K562 (cell line): ENCODE measurements at regions of chr1 and their contacts with region 1.

Region 1: DNA sequence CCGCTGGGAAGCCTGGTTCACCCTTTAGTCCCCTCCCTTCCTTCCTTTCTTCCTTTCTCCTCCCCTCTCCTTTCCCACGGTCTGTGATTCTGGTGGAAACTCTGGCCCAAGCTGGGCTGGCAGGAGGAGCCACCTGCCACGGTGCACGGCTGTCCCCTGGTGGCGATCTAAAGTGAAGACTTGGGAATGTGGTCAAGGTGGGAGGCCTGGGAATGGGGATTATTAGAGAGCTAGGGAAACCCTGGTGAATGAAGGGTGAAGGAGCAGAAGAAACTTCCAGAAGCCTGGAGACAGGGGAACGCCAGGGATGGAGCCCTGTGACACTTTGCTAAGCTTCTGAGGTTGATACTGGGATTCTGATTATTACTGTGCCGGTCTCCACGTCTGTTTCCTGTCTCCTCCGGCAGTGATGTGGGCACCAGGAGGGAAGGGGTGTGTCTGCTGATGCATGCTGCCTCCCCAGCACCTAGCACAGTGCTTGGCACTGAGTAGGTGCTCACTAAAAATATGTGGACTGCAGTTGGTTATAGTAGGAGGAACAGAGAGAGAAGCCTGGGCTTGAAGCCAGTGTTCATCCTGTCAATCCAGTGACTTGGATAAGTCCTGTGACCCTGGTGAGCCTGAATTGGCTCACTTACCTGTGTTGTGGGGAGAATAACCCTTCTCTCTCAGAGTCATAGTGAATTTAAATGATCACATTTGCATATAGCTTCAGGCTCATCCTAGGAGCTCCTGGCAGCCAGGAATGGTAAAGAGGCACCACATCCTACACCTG is 71.2 kb upstream of the NBPF3 start:
- DNase-seq: peak; percentile 72 to 86 (median 82)
- ATAC-seq: peak; percentile 91
- H3K4me3 ChIP-seq: no peak overlapping the region
- H3K27ac ChIP-seq: no peak overlapping the region
- H3K4me1 ChIP-seq: peaks cover 0 to 5% of the 10 kb centered on the region in 2 experiments; a peak in 1 of 5 replicates
- H3K27me3 ChIP-seq: peaks cover 5 to 6% of the 10 kb centered on the region in 2 experiments; a peak in 3 of 5 replicates
- CTCF ChIP-seq: peak; percentile 98 to 99 (median 99)
- EP300 ChIP-seq: peak; percentile 34
- POLR2A ChIP-seq: no peak
- RAD21 ChIP-seq: peak; percentile 100

Region 2: GRCh38 chr1:21232044-21232443 is 136.7 kb before region 1 on chr1:
- CTCF ChIA-PET with region 1: interaction called, 126 read pairs
- POLR2A ChIA-PET with region 1: interaction called, 12 read pairs
- in situ Hi-C with region 1: loop called (anchors 5 kb)
- intact Hi-C with region 1: loop called (anchors 1 kb)
- DNase-seq: peak; percentile 67 to 78 (median 76)
- ATAC-seq: peak; percentile 87
- H3K4me3 ChIP-seq: no peak overlapping the region
- H3K27ac ChIP-seq: no peak overlapping the region
- H3K4me1 ChIP-seq: no peaks in the 10 kb centered on the region
- H3K27me3 ChIP-seq: no peaks in the 10 kb centered on the region
- CTCF ChIP-seq: peak; percentile 76 to 86 (median 85)
- EP300 ChIP-seq: no peak
- POLR2A ChIP-seq: no peak
- RAD21 ChIP-seq: peak; percentile 82 to 86

Region 3: GRCh38 chr1:21324368-21325141 is 44.1 kb before region 1 on chr1:
- CTCF ChIA-PET with region 1: no interaction called
- POLR2A ChIA-PET with region 1: no interaction called
- in situ Hi-C with region 1: no loop called
- intact Hi-C with region 1: no loop called
- DNase-seq: peak; percentile 65 to 79 (median 70)
- ATAC-seq: peak; percentile 45
- H3K4me3 ChIP-seq: no peak overlapping the region
- H3K27ac ChIP-seq: peak overlapping the region; percentile 56; the same call in 2 of the 3 replicates
- H3K4me1 ChIP-seq: peaks cover 44 to 45% of the 10 kb centered on the region in 2 experiments
- H3K27me3 ChIP-seq: no peaks in the 10 kb centered on the region
- CTCF ChIP-seq: no peak
- EP300 ChIP-seq: no peak; the same call in 1 of the 2 replicates
- POLR2A ChIP-seq: no peak
- RAD21 ChIP-seq: no peak

Region 4: GRCh38 chr1:21468599-21468998 is 99.9 kb after region 1 on chr1:
- CTCF ChIA-PET with region 1: interaction called, 13 read pairs
- POLR2A ChIA-PET with region 1: no interaction called
- in situ Hi-C with region 1: no loop called
- intact Hi-C with region 1: loop called (anchors 1 kb)
- DNase-seq: peak; percentile 46 to 79 (median 54)
- ATAC-seq: peak; percentile 51; the same call in 2 of the 3 replicates
- H3K4me3 ChIP-seq: no peak overlapping the region
- H3K27ac ChIP-seq: no peak overlapping the region
- H3K4me1 ChIP-seq: no peaks in the 10 kb centered on the region
- H3K27me3 ChIP-seq: peaks cover 2 to 21% of the 10 kb centered on the region in 2 experiments; a peak in 2 of 5 replicates
- CTCF ChIP-seq: peak; percentile 66 to 79 (median 75)
- EP300 ChIP-seq: no peak
- POLR2A ChIP-seq: no peak
- RAD21 ChIP-seq: peak; percentile 69 to 84

Region 5: DNA sequence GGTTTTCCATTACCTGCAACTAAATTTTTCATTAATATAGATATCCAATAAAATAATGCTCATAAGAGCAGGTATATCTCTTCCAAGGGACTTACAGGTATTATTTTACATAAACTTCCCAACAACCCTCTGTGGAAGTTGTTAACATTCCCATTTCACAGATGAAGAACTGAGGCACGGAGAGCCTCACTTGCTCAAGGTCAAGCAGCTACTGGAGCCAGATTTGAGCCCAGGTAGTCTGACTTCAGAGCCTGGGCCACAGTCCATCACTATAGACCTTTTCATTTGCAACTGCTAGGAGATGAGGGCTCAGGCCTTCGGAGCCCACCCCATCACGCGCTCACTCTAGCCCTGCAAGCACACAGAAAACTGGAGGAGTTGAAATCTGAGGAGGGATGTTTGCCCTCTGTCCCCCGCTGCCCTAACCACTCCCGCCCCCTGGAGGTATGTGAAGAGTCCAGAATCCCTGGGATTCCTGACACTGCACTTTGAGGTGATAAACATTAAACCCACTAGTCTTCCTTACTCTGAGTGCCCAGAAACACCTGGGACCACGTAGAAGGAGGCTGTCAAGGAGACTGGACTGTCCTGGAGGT is 128.9 kb after region 1 on chr1:
- CTCF ChIA-PET with region 1: interaction called, 17 read pairs
- POLR2A ChIA-PET with region 1: no interaction called
- in situ Hi-C with region 1: no loop called
- intact Hi-C with region 1: no loop called
- DNase-seq: peak; percentile 36 to 55 (median 53)
- ATAC-seq: peak; percentile 76
- H3K4me3 ChIP-seq: no peak overlapping the region
- H3K27ac ChIP-seq: no peak overlapping the region
- H3K4me1 ChIP-seq: no peaks in the 10 kb centered on the region
- H3K27me3 ChIP-seq: peaks cover 16 to 27% of the 10 kb centered on the region in 2 experiments; a peak in 4 of 5 replicates
- CTCF ChIP-seq: peak; percentile 42 to 56 (median 55)
- EP300 ChIP-seq: no peak
- POLR2A ChIP-seq: no peak
- RAD21 ChIP-seq: peak; percentile 21 to 62

Region 6: DNA sequence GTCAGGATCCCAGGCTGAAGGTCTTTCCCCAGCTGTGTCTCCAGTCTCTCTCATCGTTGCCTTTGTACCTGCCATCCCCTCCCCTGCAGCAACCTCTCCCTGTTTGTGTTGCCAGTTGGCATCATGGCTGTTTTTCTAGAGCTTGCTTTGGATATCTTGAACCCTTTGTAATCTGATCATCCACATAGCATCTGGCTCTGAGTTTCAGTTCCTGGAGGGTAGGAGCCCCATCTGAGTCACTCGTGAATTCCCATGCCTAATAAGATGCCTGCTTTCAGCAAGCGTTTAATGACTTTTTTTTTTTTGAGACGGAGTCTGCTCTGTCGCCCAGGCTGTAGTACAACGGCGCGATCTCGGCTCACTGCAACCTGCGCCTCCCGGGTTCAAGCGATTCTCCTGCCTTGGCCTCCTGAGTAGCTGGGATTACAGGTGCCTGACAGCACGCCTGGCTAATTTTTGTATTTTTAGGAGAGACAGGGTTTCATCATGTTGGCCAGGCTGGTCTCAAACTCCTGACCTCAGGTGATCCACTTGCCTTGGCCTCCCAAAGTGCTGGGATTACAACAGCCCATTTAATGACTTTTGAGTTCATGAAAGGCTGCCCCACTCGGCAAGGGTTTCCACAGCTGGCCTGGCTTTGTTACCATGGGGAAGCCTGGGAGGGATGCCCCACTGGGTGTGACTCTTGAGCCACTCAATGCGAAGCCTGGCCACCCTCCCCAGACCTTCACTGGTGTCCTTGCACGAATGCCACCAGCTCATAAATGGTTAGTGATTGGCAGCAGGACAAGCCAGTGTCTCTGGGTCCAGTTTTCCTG is 152.4 kb after region 1 on chr1:
- CTCF ChIA-PET with region 1: no interaction called
- POLR2A ChIA-PET with region 1: no interaction called
- in situ Hi-C with region 1: no loop called
- intact Hi-C with region 1: no loop called
- DNase-seq: no peak
- ATAC-seq: no peak
- H3K4me3 ChIP-seq: no peak overlapping the region
- H3K27ac ChIP-seq: no peak overlapping the region
- H3K4me1 ChIP-seq: no peaks in the 10 kb centered on the region
- H3K27me3 ChIP-seq: peaks cover 27 to 65% of the 10 kb centered on the region in 2 experiments; a peak in 4 of 5 replicates
- CTCF ChIP-seq: no peak
- EP300 ChIP-seq: no peak
- POLR2A ChIP-seq: no peak
- RAD21 ChIP-seq: no peak

Region 7: DNA sequence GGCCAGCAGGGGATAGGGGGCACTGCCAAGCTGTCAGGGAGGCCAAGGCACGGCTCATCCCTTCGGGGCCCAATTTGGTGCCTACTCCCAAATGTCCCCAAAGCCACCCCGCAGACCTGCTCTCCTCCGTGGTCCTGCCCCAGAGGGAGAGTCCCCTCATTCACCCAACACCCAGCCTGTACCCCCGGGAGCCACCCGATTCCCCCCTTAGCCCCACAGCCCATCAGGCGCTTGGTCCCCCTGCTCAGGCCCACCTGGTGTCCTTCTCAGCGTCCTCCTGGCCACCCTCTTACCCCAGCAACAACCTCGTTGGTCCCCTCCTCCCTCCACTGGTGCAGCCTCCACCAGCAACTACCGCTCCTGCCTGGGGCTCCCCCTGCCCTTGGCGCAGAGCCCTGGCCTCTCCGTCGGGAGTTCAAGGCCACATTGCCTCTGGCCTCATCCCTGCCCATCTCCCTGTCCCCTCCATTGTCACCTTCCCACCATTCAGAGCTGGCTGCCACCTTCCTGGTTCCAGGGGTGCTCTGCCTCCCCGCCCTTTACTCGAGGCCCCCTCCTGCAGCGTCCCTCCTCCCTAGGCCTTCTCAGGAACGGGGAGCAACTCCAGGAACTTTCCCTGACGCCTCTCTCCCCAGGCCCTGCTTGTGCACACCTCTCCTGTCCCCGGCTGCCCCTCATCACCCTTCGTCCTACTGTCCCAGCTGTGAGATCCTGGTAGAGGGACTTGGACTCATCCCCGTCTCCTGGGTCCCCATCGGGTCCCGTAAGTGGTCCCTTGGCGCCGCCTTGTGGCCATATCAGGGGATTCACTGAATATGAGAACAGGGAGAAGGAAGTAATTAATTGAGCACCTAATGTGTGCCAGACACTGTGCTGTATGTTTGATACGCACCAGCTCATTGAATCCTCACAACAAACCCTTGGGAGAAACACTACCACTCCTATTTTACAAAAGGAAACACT is 226.5 kb after region 1 on chr1:
- CTCF ChIA-PET with region 1: interaction called, 10 read pairs
- POLR2A ChIA-PET with region 1: no interaction called
- in situ Hi-C with region 1: no loop called
- intact Hi-C with region 1: loop called (anchors 1 kb)
- DNase-seq: peak; percentile 81 to 87 (median 83)
- ATAC-seq: peak; percentile 83
- H3K4me3 ChIP-seq: no peak overlapping the region
- H3K27ac ChIP-seq: no peak overlapping the region
- H3K4me1 ChIP-seq: peaks cover 6 to 58% of the 10 kb centered on the region in 2 experiments; a peak in 3 of 5 replicates
- H3K27me3 ChIP-seq: 0 out of 5 replicates have a peak, but pooled peaks cover 0 to 7% of the 10 kb centered on the region in 2 experiments
- CTCF ChIP-seq: peak; percentile 89 to 95 (median 92)
- EP300 ChIP-seq: no peak
- POLR2A ChIP-seq: peak; percentile 51; the same call in 1 of the 2 replicates
- RAD21 ChIP-seq: peak; percentile 72 to 90